ENCODE measurements at regions of chr12 and their contacts with region 1.

Region 1: GRCh38 chr12:53220801-53221202 is 11.2 kb downstream of the RARG start:
- DNase-seq: peak; percentile 87
- H3K4me3 ChIP-seq: peak overlapping the region; percentile 45 to 66 (median 63)
- H3K27ac ChIP-seq: peak overlapping the region; percentile 88
- H3K4me1 ChIP-seq: peaks cover 49% of the 10 kb centered on the region
- H3K27me3 ChIP-seq: no peaks in the 10 kb centered on the region
- CTCF ChIP-seq: no peak
- POLR2A ChIP-seq: peak; percentile 51

Region 2: GRCh38 chr12:53180220-53180930 is 40.4 kb before region 1 on chr12 and contains the starts of genes CSAD and ZNF740:
- CTCF ChIA-PET with region 1: no interaction called
- POLR2A ChIA-PET with region 1: no interaction called
- dilution Hi-C with region 1: no loop called
- intact Hi-C with region 1: loop called (anchors 1 kb)
- DNase-seq: peak; percentile 96
- H3K4me3 ChIP-seq: peak within 1 kb of the TSS; percentile 60 to 91 (median 73)
- H3K27ac ChIP-seq: peak within 1 kb of the TSS; percentile 50
- H3K4me1 ChIP-seq: peaks cover 22% of the 10 kb centered on the region
- H3K27me3 ChIP-seq: no peaks in the 10 kb centered on the region
- CTCF ChIP-seq: no peak
- POLR2A ChIP-seq: peak; percentile 87
- total RNA-seq, gene CSAD: 21.1 and 22.0 TPM in 2 replicates
- total RNA-seq, gene ZNF740: 34.9 and 38.1 TPM in 2 replicates

Region 3: DNA sequence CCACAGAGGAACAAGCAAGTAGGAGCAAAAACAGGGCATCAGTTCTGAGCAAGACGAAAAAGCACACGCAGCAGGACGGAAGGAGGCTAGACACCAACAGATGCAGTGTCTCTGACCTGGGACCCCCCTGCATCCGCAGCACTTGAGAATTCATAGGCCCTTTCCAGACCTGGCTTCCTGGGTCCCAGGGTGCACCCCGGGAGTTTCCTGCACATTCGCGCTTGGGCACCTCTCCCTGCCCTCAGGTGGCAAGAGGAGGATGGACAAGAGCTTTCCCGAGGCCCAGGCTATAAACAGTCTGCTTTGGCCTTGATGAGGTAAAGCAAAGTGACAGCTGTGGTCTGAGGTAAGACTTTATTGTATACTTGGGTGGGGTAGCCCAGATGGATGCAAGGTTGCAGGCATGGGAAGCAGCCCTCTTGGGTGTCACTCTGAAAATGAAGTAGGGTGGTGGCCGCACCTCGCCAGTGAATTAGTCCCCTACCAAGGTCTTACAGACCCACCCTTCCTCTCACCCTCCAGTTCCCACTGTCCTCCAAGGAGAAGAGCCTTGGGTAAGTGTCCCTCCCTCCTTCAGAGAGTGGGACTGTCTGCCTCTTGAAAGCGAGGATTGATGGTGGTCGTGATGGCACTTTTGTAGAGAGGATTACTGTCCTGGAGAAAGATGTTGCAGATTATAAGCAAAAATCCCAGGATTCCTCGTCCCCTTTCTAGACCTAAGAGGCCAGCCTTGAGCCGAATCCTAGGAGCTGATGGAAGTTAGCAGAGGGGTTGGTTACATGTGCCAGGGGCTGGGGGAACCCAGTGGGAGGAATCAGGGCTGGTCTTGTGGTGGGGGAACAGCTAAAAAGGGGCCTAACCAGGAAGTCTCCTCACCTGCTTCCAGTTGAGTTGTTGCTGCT is 29.6 kb before region 1 on chr12:
- CTCF ChIA-PET with region 1: no interaction called
- POLR2A ChIA-PET with region 1: no interaction called
- dilution Hi-C with region 1: no loop called
- intact Hi-C with region 1: no loop called
- DNase-seq: no peak
- H3K4me3 ChIP-seq: no peak overlapping the region
- H3K27ac ChIP-seq: no peak overlapping the region
- H3K4me1 ChIP-seq: peaks cover 4% of the 10 kb centered on the region
- H3K27me3 ChIP-seq: no peaks in the 10 kb centered on the region
- CTCF ChIP-seq: no peak
- POLR2A ChIP-seq: no peak

Region 4: DNA sequence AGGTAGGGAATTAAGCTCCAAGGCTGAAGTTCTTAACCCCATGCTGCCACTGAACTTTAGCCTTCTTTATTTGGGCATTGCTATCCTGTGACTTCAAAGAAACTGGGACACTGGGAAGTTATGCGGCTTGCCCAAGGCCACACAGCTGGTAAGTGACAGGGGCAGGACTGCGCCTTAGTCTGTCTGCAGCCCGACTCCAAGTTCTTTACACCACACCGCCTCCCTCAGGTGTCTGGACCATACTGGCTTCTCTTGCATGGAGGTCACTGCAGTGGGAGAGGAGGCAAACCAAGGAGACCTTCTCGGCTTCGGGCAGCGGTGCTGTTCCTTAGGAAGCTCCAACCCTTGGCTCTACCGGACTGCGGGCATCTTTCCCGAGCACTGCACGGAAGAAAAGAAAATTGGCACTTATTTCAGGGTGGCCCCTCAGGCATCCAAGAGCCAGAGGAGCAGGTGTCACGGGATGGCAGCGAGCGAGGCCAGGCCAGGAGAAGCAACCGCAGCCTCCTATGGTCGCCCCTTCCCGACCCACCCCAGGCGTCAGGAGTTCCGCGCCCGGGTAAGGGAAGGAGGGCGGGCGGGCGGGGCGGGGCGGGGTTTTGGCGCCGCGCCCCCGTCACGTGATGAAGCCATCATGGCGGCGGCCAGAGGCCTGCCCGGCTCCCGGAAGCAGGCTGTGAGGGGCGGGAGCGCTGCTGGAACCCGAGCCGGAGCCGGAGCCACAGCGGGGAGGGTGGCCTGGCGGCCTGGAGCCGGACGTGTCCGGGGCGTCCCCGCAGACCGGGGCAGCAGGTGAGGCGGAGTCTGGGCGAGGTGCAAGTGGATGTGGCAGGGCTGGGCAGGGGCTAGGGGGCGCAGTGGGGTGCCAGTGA is 30.9 kb after region 1 on chr12:
- CTCF ChIA-PET with region 1: interaction called, 54 read pairs
- POLR2A ChIA-PET with region 1: no interaction called
- dilution Hi-C with region 1: no loop called
- intact Hi-C with region 1: loop called (anchors 1 kb)
- DNase-seq: peak; percentile 74
- H3K4me3 ChIP-seq: peak overlapping the region; percentile 78 to 97 (median 84)
- H3K27ac ChIP-seq: peak overlapping the region; percentile 40
- H3K4me1 ChIP-seq: peaks cover 14% of the 10 kb centered on the region
- H3K27me3 ChIP-seq: no peaks in the 10 kb centered on the region
- CTCF ChIP-seq: peak; percentile 23 to 54
- POLR2A ChIP-seq: peak; percentile 83

Region 5: DNA sequence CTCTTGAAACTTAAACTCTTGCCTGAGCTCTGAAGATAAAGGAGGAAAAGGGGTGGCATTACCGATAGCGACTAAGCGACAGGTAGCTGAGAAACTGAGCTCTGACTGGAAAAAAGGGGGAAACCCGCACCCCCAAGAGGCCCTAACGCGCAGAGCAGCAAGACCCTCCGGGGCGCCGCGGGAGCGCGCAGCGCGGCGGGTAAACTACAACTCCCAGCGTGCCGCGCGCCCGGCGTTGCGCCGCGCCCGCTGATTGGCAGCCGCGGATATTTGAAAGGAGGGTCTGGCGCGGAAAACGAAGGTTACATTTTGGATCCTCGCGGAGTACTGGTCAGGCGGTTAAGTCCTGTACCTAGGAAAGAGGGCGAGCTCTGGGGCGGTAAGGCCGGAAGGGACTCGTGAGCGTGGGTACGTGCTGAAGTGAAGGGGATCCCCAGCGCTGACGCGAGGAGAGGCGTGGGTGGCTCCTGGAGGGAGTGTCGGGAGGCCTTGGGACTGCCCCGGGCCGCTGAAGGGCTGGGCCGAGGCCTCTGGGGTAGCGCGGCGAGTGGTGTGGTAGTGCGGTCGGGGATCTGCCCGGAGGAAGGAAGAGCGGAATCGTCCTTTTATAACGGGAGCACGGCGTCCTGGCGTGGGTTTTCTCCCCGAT is 47.3 kb after region 1 on chr12 and contains the start of gene ESPL1:
- CTCF ChIA-PET with region 1: interaction called, 15 read pairs
- POLR2A ChIA-PET with region 1: no interaction called
- dilution Hi-C with region 1: no loop called
- intact Hi-C with region 1: loop called (anchors 1 kb)
- DNase-seq: peak; percentile 82
- H3K4me3 ChIP-seq: peak within 1 kb of the TSS; percentile 61 to 85 (median 77)
- H3K27ac ChIP-seq: no peak within 1 kb of the TSS
- H3K4me1 ChIP-seq: peaks cover 24% of the 10 kb centered on the region
- H3K27me3 ChIP-seq: no peaks in the 10 kb centered on the region
- CTCF ChIP-seq: peak; percentile 35 to 51
- POLR2A ChIP-seq: peak; percentile 15
- total RNA-seq, gene ESPL1: 39.3 and 42.7 TPM in 2 replicates

Region 6: GRCh38 chr12:53287741-53288216 is 67.0 kb after region 1 on chr12:
- CTCF ChIA-PET with region 1: interaction called, 366 read pairs
- POLR2A ChIA-PET with region 1: no interaction called
- dilution Hi-C with region 1: no loop called
- intact Hi-C with region 1: no loop called
- DNase-seq: peak; percentile 66
- H3K4me3 ChIP-seq: no peak overlapping the region
- H3K27ac ChIP-seq: no peak overlapping the region
- H3K4me1 ChIP-seq: peaks cover 17% of the 10 kb centered on the region
- H3K27me3 ChIP-seq: no peaks in the 10 kb centered on the region
- CTCF ChIP-seq: peak; percentile 45 to 65
- POLR2A ChIP-seq: no peak

Region 7: GRCh38 chr12:53295070-53295890 is 74.5 kb after region 1 on chr12 and contains the start of gene PFDN5:
- CTCF ChIA-PET with region 1: interaction called, 366 read pairs
- POLR2A ChIA-PET with region 1: no interaction called
- dilution Hi-C with region 1: no loop called
- intact Hi-C with region 1: loop called (anchors 2 kb)
- DNase-seq: peak; percentile 96
- H3K4me3 ChIP-seq: peak within 1 kb of the TSS; percentile 71 to 82 (median 82)
- H3K27ac ChIP-seq: peak within 1 kb of the TSS; percentile 63
- H3K4me1 ChIP-seq: peaks cover 31% of the 10 kb centered on the region
- H3K27me3 ChIP-seq: no peaks in the 10 kb centered on the region
- CTCF ChIP-seq: no peak
- POLR2A ChIP-seq: peak; percentile 84
- total RNA-seq, gene PFDN5: 286 and 301 TPM in 2 replicates

Region 8: GRCh38 chr12:53500776-53501614 is 280.2 kb after region 1 on chr12 and contains the start of gene TARBP2:
- CTCF ChIA-PET with region 1: no interaction called
- POLR2A ChIA-PET with region 1: no interaction called
- dilution Hi-C with region 1: no loop called
- intact Hi-C with region 1: loop called (anchors 5 kb)
- DNase-seq: peak; percentile 100
- H3K4me3 ChIP-seq: peak within 1 kb of the TSS; percentile 2 to 54 (median 49)
- H3K27ac ChIP-seq: peak within 1 kb of the TSS; percentile 52
- H3K4me1 ChIP-seq: peaks cover 32% of the 10 kb centered on the region
- H3K27me3 ChIP-seq: no peaks in the 10 kb centered on the region
- CTCF ChIP-seq: no peak
- POLR2A ChIP-seq: peak; percentile 82
- total RNA-seq, gene TARBP2: 53.8 and 57.2 TPM in 2 replicates